Posterior vena cava (tissue), 2 donors: ENCODE measurements at regions of chr7 and their contacts with region 1.

Region 1: DNA sequence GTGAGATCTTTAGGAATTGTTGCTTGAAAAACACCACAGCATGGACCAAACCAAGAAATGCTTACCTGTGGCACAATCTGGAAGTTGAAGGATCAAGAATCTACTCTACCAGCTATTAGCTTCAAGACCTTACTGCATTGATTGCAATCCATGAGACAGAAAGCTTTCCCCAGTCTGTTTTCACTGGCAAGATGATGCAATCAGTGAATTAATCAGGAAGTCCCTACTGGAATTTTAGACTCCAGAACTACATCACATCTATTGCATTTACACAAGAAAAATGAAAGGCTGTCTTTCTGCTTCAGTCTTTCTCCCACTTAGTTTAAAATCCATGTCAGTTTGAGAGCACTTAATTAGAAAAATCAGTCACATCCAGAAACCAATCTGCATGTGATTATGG is 191.7 kb downstream of the TFEC start:
- DNase-seq: no peak

Region 2: GRCh38 chr7:115748131-115748738 is 90.6 kb before region 1 on chr7:
- intact Hi-C with region 1: no loop called
- DNase-seq: no peak

Region 3: GRCh38 chr7:115825456-115826135 is 13.2 kb before region 1 on chr7:
- intact Hi-C with region 1: loop called in 1 of 2 experiments (anchors 1 kb)
- DNase-seq: no peak